Esophagus squamous epithelium (tissue), 5 donors: ENCODE measurements at regions of chr20 and their contacts with region 1.

Region 1: GRCh38 chr20:49245921-49246740 is 26.9 kb downstream of the DDX27 start:
- DNase-seq: no peak
- H3K4me3 ChIP-seq: no peak overlapping the region
- H3K27ac ChIP-seq: peak overlapping the region in 3 of 4 donors; percentile 16 to 65 (median 29)
- H3K4me1 ChIP-seq: peaks cover 0 to 33% (median 7%) of the 10 kb centered on the region in 3 donors
- H3K27me3 ChIP-seq: no peaks in the 10 kb centered on the region
- CTCF ChIP-seq: peak; percentile 24 to 69 (median 58)
- POLR2A ChIP-seq: no peak

Region 2: GRCh38 chr20:48875911-48876640 is 370.1 kb before region 1 on chr20:
- intact Hi-C with region 1: no loop called
- DNase-seq: no peak
- H3K4me3 ChIP-seq: no peak overlapping the region
- H3K27ac ChIP-seq: no peak overlapping the region
- H3K4me1 ChIP-seq: peaks cover 0 to 18% (median 0%) of the 10 kb centered on the region in 3 donors
- H3K27me3 ChIP-seq: no peaks in the 10 kb centered on the region
- CTCF ChIP-seq: no peak
- POLR2A ChIP-seq: no peak

Region 3: GRCh38 chr20:48975955-48976354 is 270.2 kb before region 1 on chr20:
- intact Hi-C with region 1: no loop called
- DNase-seq: no peak
- H3K4me3 ChIP-seq: no peak overlapping the region
- H3K27ac ChIP-seq: peak overlapping the region in 3 of 4 donors; percentile 6 to 61 (median 13)
- H3K4me1 ChIP-seq: no peaks in the 10 kb centered on the region
- H3K27me3 ChIP-seq: no peaks in the 10 kb centered on the region
- CTCF ChIP-seq: no peak
- POLR2A ChIP-seq: no peak

Region 4: GRCh38 chr20:49323622-49324238 is 77.6 kb after region 1 on chr20:
- intact Hi-C with region 1: loop called (anchors 10 kb)
- DNase-seq: no peak
- H3K4me3 ChIP-seq: no peak overlapping the region
- H3K27ac ChIP-seq: peak overlapping the region in 3 of 4 donors; percentile 44 to 66 (median 48)
- H3K4me1 ChIP-seq: peaks cover 0 to 32% (median 9%) of the 10 kb centered on the region in 3 donors
- H3K27me3 ChIP-seq: peaks cover 2 to 67% (median 8%) of the 10 kb centered on the region in 4 donors
- CTCF ChIP-seq: peak in 4 of 6 experiments; percentile 13 to 49 (median 24)
- POLR2A ChIP-seq: no peak